Activated CD4-positive, alpha-beta T cell treated with anti-CD3 and anti-CD28 coated beads for 36 hours (primary cell): ENCODE measurements at regions of chr1 and their contacts with region 1.

Region 1: DNA sequence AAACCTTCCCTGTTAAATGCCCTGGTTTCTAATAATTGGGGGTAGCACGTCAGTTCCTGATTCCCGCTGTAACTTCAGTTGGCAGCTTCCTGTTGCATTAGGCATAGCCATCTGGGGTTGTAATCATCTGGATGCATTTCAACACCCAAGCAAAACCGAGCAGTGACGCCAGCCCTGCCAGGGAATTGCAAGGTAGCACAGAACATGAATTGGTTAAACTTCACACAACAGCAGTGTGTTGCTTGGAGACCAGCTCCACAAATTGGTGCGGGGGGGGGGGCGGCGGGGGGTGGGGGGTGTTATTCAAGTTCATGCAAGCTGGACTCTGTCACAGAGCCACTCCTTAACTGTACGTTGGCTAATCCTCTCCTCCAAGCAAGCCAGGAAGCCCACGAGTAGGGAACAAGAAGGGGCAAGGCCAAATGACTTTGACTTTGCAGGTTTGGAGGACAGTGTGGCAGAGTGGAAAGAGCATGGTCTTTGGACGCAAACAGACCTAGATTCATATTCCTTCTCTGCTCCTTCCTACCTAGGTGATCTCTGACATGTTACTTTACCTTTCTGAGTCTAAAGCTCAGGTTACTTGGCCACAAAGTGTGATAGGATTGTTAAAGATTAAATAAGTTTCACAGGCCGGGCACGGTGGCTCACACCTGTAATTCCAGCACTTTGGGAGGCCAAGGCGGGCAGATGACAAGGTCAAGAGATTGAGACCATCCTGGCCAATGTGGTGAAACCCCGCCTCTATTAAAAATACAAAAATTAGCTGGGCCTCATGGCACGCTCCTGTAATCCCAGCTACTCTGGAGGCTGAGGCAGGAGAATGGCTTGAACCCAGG is 4.7 kb downstream of the LAX1 start:
- DNase-seq: no peak
- ATAC-seq: no peak
- H3K4me3 Mint-ChIP-seq: no peak overlapping the region
- H3K27ac Mint-ChIP-seq: peak overlapping the region; percentile 59
- H3K4me1 Mint-ChIP-seq: peaks cover 25% of the 10 kb centered on the region
- H3K27me3 Mint-ChIP-seq: no peaks in the 10 kb centered on the region

Region 2: DNA sequence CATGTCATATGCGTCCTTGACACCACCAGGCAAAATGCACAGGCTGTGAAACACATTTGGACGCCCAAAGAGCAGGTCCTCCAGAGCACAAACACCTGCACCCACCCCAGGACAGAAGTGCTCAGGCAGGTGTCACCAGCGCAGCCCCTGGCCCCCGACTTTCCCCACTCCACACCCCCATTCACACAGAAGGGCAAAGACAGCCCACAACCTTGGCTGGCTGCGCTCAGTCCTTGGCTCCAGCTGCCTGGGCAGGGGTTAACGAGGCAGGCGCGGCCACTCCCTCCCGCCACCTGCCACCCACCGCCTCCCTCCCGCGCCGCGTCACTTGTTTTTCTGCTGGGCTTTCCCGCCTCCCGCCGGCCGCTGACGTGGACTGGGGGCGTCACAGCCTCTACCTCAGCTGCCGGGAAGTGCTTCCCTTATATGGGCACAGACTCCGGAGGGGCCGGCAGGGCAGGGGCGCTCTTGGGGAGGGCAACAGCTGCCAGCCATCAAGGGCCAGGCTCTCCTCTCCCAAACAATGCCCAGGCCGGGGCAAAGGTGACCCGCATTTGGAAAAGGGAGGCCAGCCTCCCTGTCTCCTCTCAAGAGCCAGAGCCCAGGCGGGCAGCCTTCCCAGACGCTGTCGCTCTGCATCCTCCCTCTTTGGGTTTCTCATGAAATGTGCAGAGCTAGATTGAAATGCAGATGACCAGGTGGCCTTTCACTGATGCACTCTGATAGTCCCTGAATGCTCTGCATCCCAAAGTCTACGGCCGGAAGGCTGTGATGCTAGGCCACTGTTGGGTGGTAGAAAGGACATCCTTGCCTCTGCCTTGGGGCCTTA is 479.2 kb before region 1 on chr1:
- CTCF ChIA-PET with region 1: no interaction called
- POLR2A ChIA-PET with region 1: no interaction called
- intact Hi-C with region 1: loop called in 1 of 2 experiments (anchors 1 kb)
- DNase-seq: peak; percentile 99
- ATAC-seq: peak; percentile 50
- H3K4me3 Mint-ChIP-seq: peak overlapping the region; percentile 78
- H3K27ac Mint-ChIP-seq: peak overlapping the region; percentile 98
- H3K4me1 Mint-ChIP-seq: peaks cover 83% of the 10 kb centered on the region
- H3K27me3 Mint-ChIP-seq: no peaks in the 10 kb centered on the region

Region 3: GRCh38 chr1:203597331-203598090 is 172.2 kb before region 1 on chr1:
- CTCF ChIA-PET with region 1: no interaction called
- POLR2A ChIA-PET with region 1: no interaction called
- intact Hi-C with region 1: no loop called
- DNase-seq: no peak
- ATAC-seq: no peak
- H3K4me3 Mint-ChIP-seq: no peak overlapping the region
- H3K27ac Mint-ChIP-seq: no peak overlapping the region
- H3K4me1 Mint-ChIP-seq: peaks cover 11% of the 10 kb centered on the region
- H3K27me3 Mint-ChIP-seq: no peaks in the 10 kb centered on the region

Region 4: GRCh38 chr1:203609979-203610493 is 159.7 kb before region 1 on chr1:
- CTCF ChIA-PET with region 1: no interaction called
- POLR2A ChIA-PET with region 1: no interaction called
- intact Hi-C with region 1: loop called in 1 of 2 experiments (anchors 5 kb)
- DNase-seq: no peak
- ATAC-seq: no peak
- H3K4me3 Mint-ChIP-seq: no peak overlapping the region
- H3K27ac Mint-ChIP-seq: peak overlapping the region; percentile 7
- H3K4me1 Mint-ChIP-seq: peaks cover 46% of the 10 kb centered on the region
- H3K27me3 Mint-ChIP-seq: no peaks in the 10 kb centered on the region

Region 5: GRCh38 chr1:203673550-203674427 is 95.9 kb before region 1 on chr1:
- CTCF ChIA-PET with region 1: no interaction called
- POLR2A ChIA-PET with region 1: no interaction called
- intact Hi-C with region 1: no loop called
- DNase-seq: peak; percentile 81
- ATAC-seq: peak; percentile 95
- H3K4me3 Mint-ChIP-seq: peak overlapping the region; percentile 56
- H3K27ac Mint-ChIP-seq: peak overlapping the region; percentile 83
- H3K4me1 Mint-ChIP-seq: peaks cover 65% of the 10 kb centered on the region
- H3K27me3 Mint-ChIP-seq: no peaks in the 10 kb centered on the region

Region 6: DNA sequence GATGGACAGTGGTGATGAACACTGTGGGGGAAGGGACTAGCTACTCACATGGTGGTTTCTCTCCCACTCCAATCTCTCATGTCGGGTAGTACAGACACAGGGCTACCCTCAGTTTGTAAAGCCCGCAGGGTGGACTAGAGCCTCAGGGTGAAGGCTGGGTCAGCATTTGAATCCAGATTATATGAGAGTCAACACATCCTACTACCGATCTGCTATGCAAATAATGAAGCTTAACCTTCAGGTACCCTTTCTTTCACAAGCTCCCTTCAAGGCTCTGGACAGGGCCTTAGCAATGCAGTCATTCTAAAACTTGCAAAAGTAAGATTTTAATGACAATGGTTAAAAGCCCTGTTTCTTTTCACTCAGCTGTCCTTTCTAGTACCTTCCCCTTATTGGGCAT is 20.2 kb after region 1 on chr1:
- CTCF ChIA-PET with region 1: interaction called, 4 read pairs
- POLR2A ChIA-PET with region 1: interaction called, 11 read pairs
- intact Hi-C with region 1: loop called (anchors 1 kb)
- DNase-seq: no peak
- ATAC-seq: no peak
- H3K4me3 Mint-ChIP-seq: no peak overlapping the region
- H3K27ac Mint-ChIP-seq: no peak overlapping the region
- H3K4me1 Mint-ChIP-seq: peaks cover 3% of the 10 kb centered on the region
- H3K27me3 Mint-ChIP-seq: no peaks in the 10 kb centered on the region

Region 7: DNA sequence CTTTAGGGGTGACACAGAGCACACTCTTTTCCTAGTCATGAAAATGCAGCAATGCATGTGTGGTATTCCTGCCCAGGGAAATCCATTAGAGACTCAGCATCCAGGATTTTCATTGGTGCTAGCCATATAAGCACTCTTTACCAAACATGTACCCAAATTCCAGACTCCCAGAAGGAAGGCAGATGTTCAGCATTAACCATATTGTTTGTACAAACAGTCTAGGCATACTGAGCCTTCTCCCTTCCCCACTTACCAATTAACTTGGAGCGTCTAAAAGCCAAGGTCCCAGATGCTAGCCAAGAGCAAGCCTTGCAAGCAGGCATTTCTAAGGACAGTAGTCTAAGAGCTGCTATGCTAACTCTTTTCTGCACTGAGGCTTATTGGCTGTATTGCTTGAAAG is 53.6 kb after region 1 on chr1:
- CTCF ChIA-PET with region 1: no interaction called
- POLR2A ChIA-PET with region 1: interaction called, 4 read pairs
- intact Hi-C with region 1: loop called in 1 of 2 experiments (anchors 1 kb)
- DNase-seq: no peak
- ATAC-seq: no peak
- H3K4me3 Mint-ChIP-seq: no peak overlapping the region
- H3K27ac Mint-ChIP-seq: no peak overlapping the region
- H3K4me1 Mint-ChIP-seq: peaks cover 26% of the 10 kb centered on the region
- H3K27me3 Mint-ChIP-seq: no peaks in the 10 kb centered on the region

Region 8: DNA sequence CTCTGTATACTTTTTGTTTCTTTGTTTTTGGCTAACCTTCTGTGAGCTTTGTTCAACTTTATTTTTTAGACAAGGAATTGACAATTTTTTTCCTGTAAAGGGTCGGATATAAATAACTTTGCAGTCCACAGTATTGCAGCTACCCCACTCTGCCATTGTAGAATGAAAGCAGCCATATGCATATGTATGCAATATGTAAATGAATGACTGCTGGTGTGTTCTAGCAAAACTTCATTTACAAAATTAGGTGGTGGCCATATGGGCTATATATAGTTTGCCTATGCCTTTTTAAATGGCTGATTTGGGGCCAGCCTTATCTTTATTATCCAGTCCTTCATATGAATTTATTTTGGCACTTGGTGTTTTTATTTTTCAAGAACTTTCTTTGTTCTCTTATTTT is 73.7 kb after region 1 on chr1:
- CTCF ChIA-PET with region 1: no interaction called
- POLR2A ChIA-PET with region 1: no interaction called
- intact Hi-C with region 1: no loop called
- DNase-seq: no peak
- ATAC-seq: no peak
- H3K4me3 Mint-ChIP-seq: no peak overlapping the region
- H3K27ac Mint-ChIP-seq: no peak overlapping the region
- H3K4me1 Mint-ChIP-seq: no peaks in the 10 kb centered on the region
- H3K27me3 Mint-ChIP-seq: no peaks in the 10 kb centered on the region